Caco-2 (cell line): ENCODE measurements at regions of chr1 and their contacts with region 1.

Region 1: DNA sequence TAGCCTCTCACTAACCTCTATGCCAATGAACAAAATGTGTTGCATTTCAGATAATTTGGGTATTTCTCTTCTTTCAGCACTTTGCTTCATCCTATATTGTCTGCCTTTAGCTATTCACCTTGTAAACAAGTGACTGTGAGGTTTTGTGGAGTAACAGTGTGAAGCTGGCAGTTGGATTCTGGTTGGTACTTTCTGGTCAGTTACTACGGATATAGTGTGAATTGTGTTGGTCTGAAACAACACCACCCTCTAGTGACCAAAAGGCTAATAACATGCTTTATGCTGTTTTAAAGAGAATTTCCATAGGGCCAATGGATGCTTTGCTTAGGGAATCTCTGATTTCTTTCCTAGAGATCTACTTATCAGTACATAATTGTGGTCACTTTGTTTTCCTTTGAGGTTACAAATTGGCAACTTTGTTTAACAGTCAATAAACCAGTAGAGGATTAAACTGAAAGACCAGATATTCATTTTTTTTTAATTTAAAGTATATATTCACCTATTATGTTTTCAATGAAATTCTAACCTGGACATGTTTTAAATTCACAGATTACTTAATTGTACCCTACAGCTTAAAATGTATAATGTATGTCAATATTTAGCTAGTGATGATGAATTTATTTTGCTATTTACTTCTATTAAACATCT is 2.5 kb upstream of the PTGER3 start:
- DNase-seq: peak in 1 of 2 experiments; percentile 57
- H3K4me3 ChIP-seq: no peak overlapping the region
- H3K4me3 Mint-ChIP-seq: no peak overlapping the region
- H3K27ac Mint-ChIP-seq: no peak overlapping the region
- H3K4me1 ChIP-seq: no peaks in the 10 kb centered on the region
- H3K4me1 Mint-ChIP-seq: no peaks in the 10 kb centered on the region
- H3K27me3 ChIP-seq: no peaks in the 10 kb centered on the region
- H3K27me3 Mint-ChIP-seq: no peaks in the 10 kb centered on the region
- CTCF ChIP-seq: peak; percentile 35

Region 2: GRCh38 chr1:70685300-70686241 is 364.5 kb before region 1 on chr1:
- CTCF ChIA-PET with region 1: interaction called, 4 read pairs
- POLR2A ChIA-PET with region 1: no interaction called
- intact Hi-C with region 1: loop called (anchors 1 kb)
- DNase-seq: peak; percentile 42 to 56
- H3K4me3 ChIP-seq: no peak overlapping the region
- H3K4me3 Mint-ChIP-seq: no peak overlapping the region
- H3K27ac Mint-ChIP-seq: no peak overlapping the region
- H3K4me1 ChIP-seq: no peaks in the 10 kb centered on the region
- H3K4me1 Mint-ChIP-seq: no peaks in the 10 kb centered on the region
- H3K27me3 ChIP-seq: no peaks in the 10 kb centered on the region
- H3K27me3 Mint-ChIP-seq: peaks cover 6% of the 10 kb centered on the region
- CTCF ChIP-seq: peak; percentile 71 to 72

Region 3: GRCh38 chr1:70745199-70745598 is 304.9 kb before region 1 on chr1:
- CTCF ChIA-PET with region 1: no interaction called
- POLR2A ChIA-PET with region 1: no interaction called
- intact Hi-C with region 1: loop called (anchors 1 kb)
- DNase-seq: peak in 1 of 2 experiments; percentile 1
- H3K4me3 ChIP-seq: no peak overlapping the region
- H3K4me3 Mint-ChIP-seq: no peak overlapping the region
- H3K27ac Mint-ChIP-seq: no peak overlapping the region
- H3K4me1 ChIP-seq: no peaks in the 10 kb centered on the region
- H3K4me1 Mint-ChIP-seq: no peaks in the 10 kb centered on the region
- H3K27me3 ChIP-seq: no peaks in the 10 kb centered on the region
- H3K27me3 Mint-ChIP-seq: peaks cover 3% of the 10 kb centered on the region
- CTCF ChIP-seq: peak in 1 of 2 experiments; percentile 38

Region 4: GRCh38 chr1:71080739-71081696 is 30.9 kb after region 1 on chr1 and contains the start of gene ZRANB2:
- CTCF ChIA-PET with region 1: no interaction called
- POLR2A ChIA-PET with region 1: no interaction called
- intact Hi-C with region 1: no loop called
- DNase-seq: peak; percentile 87 to 92
- H3K4me3 ChIP-seq: peak within 1 kb of the TSS; percentile 65
- H3K4me3 Mint-ChIP-seq: peak within 1 kb of the TSS; percentile 75
- H3K27ac Mint-ChIP-seq: peak within 1 kb of the TSS; percentile 99
- H3K4me1 ChIP-seq: no peaks in the 10 kb centered on the region
- H3K4me1 Mint-ChIP-seq: no peaks in the 10 kb centered on the region
- H3K27me3 ChIP-seq: no peaks in the 10 kb centered on the region
- H3K27me3 Mint-ChIP-seq: no peaks in the 10 kb centered on the region
- CTCF ChIP-seq: peak in 1 of 2 experiments; percentile 60
- total RNA-seq, gene ZRANB2: 48.0 and 54.2 TPM in 2 replicates

Region 5: GRCh38 chr1:71147637-71148360 is 97.7 kb after region 1 on chr1:
- CTCF ChIA-PET with region 1: no interaction called
- POLR2A ChIA-PET with region 1: no interaction called
- intact Hi-C with region 1: no loop called
- DNase-seq: no peak
- H3K4me3 ChIP-seq: no peak overlapping the region
- H3K4me3 Mint-ChIP-seq: no peak overlapping the region
- H3K27ac Mint-ChIP-seq: no peak overlapping the region
- H3K4me1 ChIP-seq: no peaks in the 10 kb centered on the region
- H3K4me1 Mint-ChIP-seq: no peaks in the 10 kb centered on the region
- H3K27me3 ChIP-seq: no peaks in the 10 kb centered on the region
- H3K27me3 Mint-ChIP-seq: peaks cover 3% of the 10 kb centered on the region
- CTCF ChIP-seq: no peak